GM12878 (cell line): ENCODE measurements at regions of chrX and their contacts with region 1.

Region 1: GRCh38 chrX:79081895-79082512 is 62.5 kb upstream of the GPR174 start:
- DNase-seq: peak; percentile 61
- ATAC-seq: peak; percentile 87
- H3K4me3 ChIP-seq: no peak overlapping the region
- H3K27ac ChIP-seq: no peak overlapping the region
- H3K4me1 ChIP-seq: no peaks in the 10 kb centered on the region
- H3K27me3 ChIP-seq: no peaks in the 10 kb centered on the region
- CTCF ChIP-seq: peak; percentile 54 to 82 (median 63); a peak in 5 of 6 replicates
- EP300 ChIP-seq: no peak
- POLR2A ChIP-seq: no peak
- RAD21 ChIP-seq: peak; percentile 83

Region 2: GRCh38 chrX:78708262-78708661 is 373.7 kb before region 1 on chrX:
- CTCF ChIA-PET with region 1: interaction called, 28 read pairs
- POLR2A ChIA-PET with region 1: no interaction called
- RAD21 ChIA-PET with region 1: interaction called, 14 read pairs
- SMC1A ChIA-PET with region 1: interaction called, 27 read pairs
- in situ Hi-C with region 1: no loop called
- intact Hi-C with region 1: no loop called
- DNase-seq: no peak
- ATAC-seq: peak; percentile 46; the same call in 2 of the 3 replicates
- H3K4me3 ChIP-seq: no peak overlapping the region
- H3K27ac ChIP-seq: no peak overlapping the region
- H3K4me1 ChIP-seq: no peaks in the 10 kb centered on the region
- H3K27me3 ChIP-seq: no peaks in the 10 kb centered on the region
- CTCF ChIP-seq: peak; percentile 26 to 43 (median 36); a peak in 5 of 6 replicates
- EP300 ChIP-seq: no peak
- POLR2A ChIP-seq: no peak
- RAD21 ChIP-seq: peak; percentile 61

Region 3: DNA sequence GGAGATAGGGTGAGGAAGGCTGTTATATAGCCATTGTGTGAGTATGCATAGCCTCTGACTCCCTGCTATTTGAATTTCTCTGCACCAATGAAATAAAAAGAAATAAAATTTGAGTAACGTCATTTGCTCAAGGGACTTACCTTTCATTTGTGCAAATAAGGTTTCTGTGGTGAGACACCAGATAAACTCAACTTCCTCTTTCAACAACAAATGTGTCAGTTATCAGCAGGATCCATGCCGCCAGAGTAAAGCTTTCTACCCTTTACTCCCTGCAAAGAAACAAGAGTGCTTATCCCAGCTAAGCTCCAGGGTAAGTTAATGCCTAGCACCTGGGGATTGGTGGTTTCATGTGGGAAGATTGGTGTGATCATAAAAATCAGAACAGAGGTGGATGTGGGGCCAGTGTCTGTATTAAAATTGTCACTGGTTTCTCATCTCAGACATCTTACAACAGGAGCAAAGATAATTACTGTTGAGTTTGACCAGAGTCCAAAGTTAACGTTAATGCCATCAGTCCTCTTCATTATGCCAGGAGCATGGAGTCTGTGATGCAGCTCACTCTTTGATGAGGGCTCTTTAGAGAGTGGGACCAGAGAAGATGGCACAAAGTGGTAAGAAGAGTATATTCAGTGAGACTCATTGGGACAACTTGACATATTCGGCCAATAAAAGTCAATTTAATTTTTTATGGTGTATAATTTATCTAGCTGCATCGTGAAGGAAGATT is 136.7 kb before region 1 on chrX and contains the start of gene P2RY10:
- CTCF ChIA-PET with region 1: interaction called, 14 read pairs
- POLR2A ChIA-PET with region 1: no interaction called
- RAD21 ChIA-PET with region 1: interaction called, 41 read pairs
- SMC1A ChIA-PET with region 1: interaction called, 45 read pairs
- in situ Hi-C with region 1: no loop called
- intact Hi-C with region 1: loop called (anchors 1 kb)
- DNase-seq: peak; percentile 85
- ATAC-seq: peak; percentile 79
- H3K4me3 ChIP-seq: peak within 1 kb of the TSS; percentile 86
- H3K27ac ChIP-seq: peak within 1 kb of the TSS; percentile 84
- H3K4me1 ChIP-seq: peaks cover 10% of the 10 kb centered on the region
- H3K27me3 ChIP-seq: no peaks in the 10 kb centered on the region
- CTCF ChIP-seq: no peak
- EP300 ChIP-seq: peak; percentile 88 to 90
- POLR2A ChIP-seq: peak; percentile 67
- RAD21 ChIP-seq: no peak
- polyA plus RNA-seq, gene P2RY10: 43.8 to 71.9 TPM

Region 4: DNA sequence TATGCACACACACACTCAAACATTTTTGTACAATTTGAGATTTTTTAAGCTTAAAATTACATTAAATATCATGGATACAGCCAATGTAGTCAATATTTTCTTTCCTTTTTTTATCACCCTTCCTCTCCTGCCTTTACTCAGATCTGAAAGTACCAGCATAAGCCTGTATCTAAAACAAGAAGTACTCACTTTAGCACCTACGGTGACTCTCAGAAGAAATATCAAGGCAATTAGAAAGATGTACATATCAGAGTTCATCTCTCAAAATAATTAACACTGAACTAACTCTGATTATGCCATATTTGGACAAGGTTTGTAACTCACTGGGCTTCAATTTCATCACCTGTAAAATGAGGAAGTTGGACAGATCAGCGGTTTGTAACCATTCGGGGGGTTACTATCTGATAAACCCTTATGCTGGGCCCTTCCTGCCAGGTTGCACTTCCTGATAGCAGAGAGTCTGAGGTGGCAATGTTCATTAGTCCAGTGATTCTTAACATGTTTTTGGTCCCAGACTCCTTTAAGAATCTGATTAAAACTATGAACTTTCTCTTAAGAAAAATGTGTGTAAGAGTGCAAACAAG is 56.7 kb after region 1 on chrX:
- CTCF ChIA-PET with region 1: interaction called, 6 read pairs
- POLR2A ChIA-PET with region 1: no interaction called
- RAD21 ChIA-PET with region 1: interaction called, 15 read pairs
- SMC1A ChIA-PET with region 1: interaction called, 12 read pairs
- in situ Hi-C with region 1: no loop called
- intact Hi-C with region 1: no loop called
- DNase-seq: peak; percentile 79
- ATAC-seq: peak; percentile 95
- H3K4me3 ChIP-seq: no peak overlapping the region
- H3K27ac ChIP-seq: peak overlapping the region; percentile 84
- H3K4me1 ChIP-seq: peaks cover 10% of the 10 kb centered on the region; the same call in 1 of the 2 replicates
- H3K27me3 ChIP-seq: no peaks in the 10 kb centered on the region
- CTCF ChIP-seq: no peak
- EP300 ChIP-seq: peak; percentile 78 to 83; a peak in 2 of 4 replicates
- POLR2A ChIP-seq: no peak
- RAD21 ChIP-seq: no peak

Region 5: GRCh38 chrX:79259073-79259689 is 177.2 kb after region 1 on chrX:
- CTCF ChIA-PET with region 1: interaction called, 10 read pairs
- POLR2A ChIA-PET with region 1: no interaction called
- RAD21 ChIA-PET with region 1: interaction called, 22 read pairs
- SMC1A ChIA-PET with region 1: interaction called, 5 read pairs
- in situ Hi-C with region 1: no loop called
- intact Hi-C with region 1: no loop called
- DNase-seq: peak; percentile 99
- ATAC-seq: peak; percentile 89
- H3K4me3 ChIP-seq: peak overlapping the region; percentile 30; the same call in 1 of the 2 replicates
- H3K27ac ChIP-seq: peak overlapping the region; percentile 87
- H3K4me1 ChIP-seq: peaks cover 21% of the 10 kb centered on the region; the same call in 1 of the 2 replicates
- H3K27me3 ChIP-seq: no peaks in the 10 kb centered on the region
- CTCF ChIP-seq: no peak
- EP300 ChIP-seq: peak; percentile 79 to 84; a peak in 3 of 4 replicates
- POLR2A ChIP-seq: no peak
- RAD21 ChIP-seq: peak; percentile 20; the same call in 1 of the 2 replicates

Region 6: GRCh38 chrX:79325263-79325958 is 243.4 kb after region 1 on chrX:
- CTCF ChIA-PET with region 1: no interaction called
- POLR2A ChIA-PET with region 1: no interaction called
- RAD21 ChIA-PET with region 1: no interaction called
- SMC1A ChIA-PET with region 1: no interaction called
- in situ Hi-C with region 1: no loop called
- intact Hi-C with region 1: no loop called
- DNase-seq: no peak
- ATAC-seq: peak; percentile 59
- H3K4me3 ChIP-seq: no peak overlapping the region
- H3K27ac ChIP-seq: no peak overlapping the region
- H3K4me1 ChIP-seq: no peaks in the 10 kb centered on the region
- H3K27me3 ChIP-seq: no peaks in the 10 kb centered on the region
- CTCF ChIP-seq: no peak
- EP300 ChIP-seq: no peak
- POLR2A ChIP-seq: no peak
- RAD21 ChIP-seq: no peak